HepG2 (cell line): ENCODE measurements at regions of chr3 and their contacts with region 1.

Region 1: GRCh38 chr3:164498917-164499316 is 579.4 kb downstream of the SI start:
- DNase-seq: peak; percentile 44
- ATAC-seq: peak; percentile 91
- H3K4me3 ChIP-seq: no peak overlapping the region; a peak in 1 of 6 replicates
- H3K27ac ChIP-seq: no peak overlapping the region
- H3K4me1 ChIP-seq: peaks cover 13% of the 10 kb centered on the region
- H3K27me3 ChIP-seq: no peaks in the 10 kb centered on the region
- CTCF ChIP-seq: no peak
- EP300 ChIP-seq: peak in 1 of 2 experiments; percentile 44; a peak in 1 of 4 replicates
- POLR2A ChIP-seq: no peak
- RAD21 ChIP-seq: no peak

Region 2: GRCh38 chr3:164524226-164524625 is 25.3 kb after region 1 on chr3:
- CTCF ChIA-PET with region 1: no interaction called
- POLR2A ChIA-PET with region 1: no interaction called
- in situ Hi-C with region 1: no loop called
- intact Hi-C with region 1: loop called (anchors 1 kb)
- DNase-seq: peak; percentile 69
- ATAC-seq: peak; percentile 97
- H3K4me3 ChIP-seq: no peak overlapping the region
- H3K27ac ChIP-seq: no peak overlapping the region
- H3K4me1 ChIP-seq: peaks cover 15% of the 10 kb centered on the region
- H3K27me3 ChIP-seq: no peaks in the 10 kb centered on the region
- CTCF ChIP-seq: no peak
- EP300 ChIP-seq: peak in 1 of 2 experiments; percentile 57; a peak in 1 of 4 replicates
- POLR2A ChIP-seq: no peak
- RAD21 ChIP-seq: no peak